Heart right ventricle (tissue), 16 donors: ENCODE measurements at regions of chrX and their contacts with region 1.

Region 1: DNA sequence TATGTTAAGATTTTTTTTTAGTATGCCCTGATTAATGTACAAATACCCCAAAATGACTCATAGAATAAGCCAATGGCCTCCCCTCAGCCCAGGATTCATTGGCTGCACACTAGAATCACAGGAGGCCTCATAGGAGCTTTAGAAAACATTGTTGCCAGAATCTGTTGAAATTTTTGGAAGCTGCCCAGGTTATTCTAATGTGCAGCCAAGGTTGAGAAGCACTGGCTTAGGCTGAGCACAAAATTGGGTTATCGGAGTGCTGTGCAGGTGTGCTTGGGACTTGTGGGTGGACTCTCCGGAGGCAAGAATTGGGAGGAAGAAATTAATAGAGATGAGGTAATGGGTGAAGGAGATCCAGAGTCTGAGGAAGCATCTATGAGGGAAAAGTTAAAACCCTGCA is 41.3 kb upstream of the VCX start:
- DNase-seq: no peak
- ATAC-seq: no peak
- H3K4me3 ChIP-seq: no peak overlapping the region
- H3K27ac ChIP-seq: no peak overlapping the region
- H3K4me1 ChIP-seq: no peaks in the 10 kb centered on the region
- H3K27me3 ChIP-seq: no peaks in the 10 kb centered on the region
- CTCF ChIP-seq: no peak

Region 2: DNA sequence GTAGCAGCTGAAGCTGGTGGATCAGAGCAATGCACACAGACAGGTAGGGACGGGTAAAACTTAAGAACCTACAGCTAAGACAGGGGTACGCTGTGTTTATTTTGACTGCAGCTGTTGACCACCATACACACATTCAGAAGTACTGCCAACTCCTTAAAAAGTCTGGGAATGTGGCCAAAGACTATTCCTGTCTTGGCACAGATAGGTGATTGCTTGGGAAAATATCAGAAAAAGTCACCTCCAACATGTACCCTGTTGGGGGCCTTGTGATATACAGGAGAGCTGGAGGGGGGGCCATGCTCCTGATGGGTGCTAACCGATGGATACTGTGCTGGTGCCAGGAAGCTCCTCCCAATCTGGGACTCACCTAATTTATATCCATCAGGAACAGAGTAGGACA is 248.1 kb after region 1 on chrX:
- intact Hi-C with region 1: loop called in 1 of 10 experiments (anchors 5 kb)
- DNase-seq: peak in 1 of 2 donors; percentile 15
- ATAC-seq: peak; percentile 29 to 86 (median 84)
- H3K4me3 ChIP-seq: no peak overlapping the region
- H3K27ac ChIP-seq: peak overlapping the region in 5 of 10 donors; percentile 13 to 38 (median 31)
- H3K4me1 ChIP-seq: peaks cover 0 to 17% (median 0%) of the 10 kb centered on the region in 9 donors
- H3K27me3 ChIP-seq: no peaks in the 10 kb centered on the region
- CTCF ChIP-seq: no peak